PC-3 (cell line): ENCODE measurements at regions of chr5 and their contacts with region 1.

Region 1: GRCh38 chr5:32767948-32768427 is 56.9 kb downstream of the NPR3 start:
- DNase-seq: peak; percentile 99
- ATAC-seq: peak; percentile 99
- H3K4me3 ChIP-seq: no peak overlapping the region
- H3K27ac ChIP-seq: peak overlapping the region; percentile 96
- H3K4me1 ChIP-seq: peaks cover 20% of the 10 kb centered on the region
- H3K27me3 ChIP-seq: no peaks in the 10 kb centered on the region
- CTCF ChIP-seq: no peak

Region 2: DNA sequence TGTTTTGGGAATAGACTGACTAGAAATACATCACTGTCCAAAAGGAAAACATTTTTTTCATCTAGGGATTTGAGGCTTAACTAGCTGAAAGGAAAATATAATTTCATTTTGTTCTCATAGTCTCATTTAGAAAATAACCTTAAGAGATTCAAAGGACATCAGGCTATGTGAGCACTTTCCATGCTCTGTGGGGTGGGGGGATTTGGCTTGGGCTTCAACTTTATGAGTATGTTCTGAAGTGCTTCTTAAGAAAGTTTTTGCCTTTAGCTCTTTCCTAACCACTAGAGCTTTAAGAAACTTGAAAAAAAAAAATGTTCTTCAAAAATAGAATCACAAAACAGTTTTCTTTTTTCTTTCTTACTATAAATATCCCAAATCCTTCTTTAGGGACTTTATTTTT is 1556.9 kb before region 1 on chr5:
- CTCF ChIA-PET with region 1: no interaction called
- POLR2A ChIA-PET with region 1: no interaction called
- intact Hi-C with region 1: no loop called
- DNase-seq: no peak
- ATAC-seq: no peak
- H3K4me3 ChIP-seq: no peak overlapping the region
- H3K27ac ChIP-seq: no peak overlapping the region
- H3K4me1 ChIP-seq: no peaks in the 10 kb centered on the region
- H3K27me3 ChIP-seq: peaks cover 62% of the 10 kb centered on the region
- CTCF ChIP-seq: no peak

Region 3: GRCh38 chr5:32489791-32490582 is 278.0 kb before region 1 on chr5:
- CTCF ChIA-PET with region 1: no interaction called
- POLR2A ChIA-PET with region 1: no interaction called
- intact Hi-C with region 1: no loop called
- DNase-seq: peak; percentile 86
- ATAC-seq: peak; percentile 88
- H3K4me3 ChIP-seq: peak overlapping the region; percentile 9; the same call in 1 of the 2 replicates
- H3K27ac ChIP-seq: peak overlapping the region; percentile 53
- H3K4me1 ChIP-seq: peaks cover 14% of the 10 kb centered on the region
- H3K27me3 ChIP-seq: no peaks in the 10 kb centered on the region
- CTCF ChIP-seq: peak; percentile 91

Region 4: DNA sequence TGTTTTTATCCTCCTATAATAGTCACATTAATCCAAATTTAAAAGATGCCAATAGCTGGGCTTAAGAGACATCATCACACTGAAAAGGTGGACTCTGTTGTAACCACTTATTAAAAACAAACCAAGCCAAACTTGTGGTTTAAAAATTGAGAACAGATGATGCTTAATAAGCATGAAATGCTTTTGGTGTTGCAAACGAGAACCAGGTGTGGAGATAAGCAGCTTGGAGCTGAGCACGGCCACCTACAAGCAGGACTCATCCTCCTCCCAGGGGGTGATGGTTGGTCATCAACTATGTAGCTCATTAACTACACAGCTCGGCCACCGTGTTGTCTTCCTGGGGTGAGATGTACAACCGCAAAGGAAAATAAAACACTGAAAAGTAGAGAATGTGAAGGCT is 97.5 kb after region 1 on chr5:
- CTCF ChIA-PET with region 1: no interaction called
- POLR2A ChIA-PET with region 1: no interaction called
- intact Hi-C with region 1: loop called (anchors 10 kb)
- DNase-seq: no peak
- ATAC-seq: no peak
- H3K4me3 ChIP-seq: no peak overlapping the region
- H3K27ac ChIP-seq: no peak overlapping the region
- H3K4me1 ChIP-seq: peaks cover 44% of the 10 kb centered on the region
- H3K27me3 ChIP-seq: no peaks in the 10 kb centered on the region
- CTCF ChIP-seq: no peak

Region 5: GRCh38 chr5:33068786-33069185 is 300.8 kb after region 1 on chr5:
- CTCF ChIA-PET with region 1: no interaction called
- POLR2A ChIA-PET with region 1: no interaction called
- intact Hi-C with region 1: no loop called
- DNase-seq: peak; percentile 71
- ATAC-seq: peak; percentile 66
- H3K4me3 ChIP-seq: no peak overlapping the region
- H3K27ac ChIP-seq: peak overlapping the region; percentile 29; the same call in 1 of the 2 replicates
- H3K4me1 ChIP-seq: peaks cover 13% of the 10 kb centered on the region
- H3K27me3 ChIP-seq: no peaks in the 10 kb centered on the region
- CTCF ChIP-seq: no peak